Activated CD4-positive, alpha-beta memory T cell treated with anti-CD3 and anti-CD28 coated beads, Interleukin-2, amount 10 ng/mL, durations not matched to agents 7 days and 5 days (primary cell): ENCODE measurements at regions of chr1 and their contacts with region 1.

Region 1: GRCh38 chr1:223133824-223134435 is 9.1 kb downstream of the TLR5 start:
- DNase-seq: peak; percentile 75
- H3K4me3 Mint-ChIP-seq: no peak overlapping the region
- H3K27ac Mint-ChIP-seq: no peak overlapping the region
- H3K4me1 Mint-ChIP-seq: peaks cover 6% of the 10 kb centered on the region
- H3K27me3 Mint-ChIP-seq: peaks cover 56% of the 10 kb centered on the region

Region 2: DNA sequence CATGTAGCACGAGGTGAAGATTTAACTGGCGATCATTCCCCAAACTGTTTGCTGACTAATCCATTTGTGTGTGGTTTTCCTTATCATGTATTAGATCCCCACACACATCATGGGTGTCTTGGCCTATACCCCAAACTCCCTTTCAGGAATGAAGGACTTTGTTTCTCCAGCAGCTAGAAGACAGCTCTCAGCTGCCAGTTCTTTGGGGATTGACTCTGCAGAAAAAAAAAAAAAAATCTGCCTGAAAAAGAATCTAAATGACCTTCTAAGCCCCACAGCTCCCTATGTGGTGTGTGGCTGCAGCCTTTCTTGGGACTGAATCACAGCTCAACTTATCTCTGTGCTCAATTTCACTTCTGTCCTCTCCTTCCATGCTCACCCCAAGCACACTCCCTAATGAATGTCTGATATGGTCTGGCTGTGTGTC is 1135.7 kb before region 1 on chr1:
- CTCF ChIA-PET with region 1: no interaction called
- POLR2A ChIA-PET with region 1: no interaction called
- DNase-seq: no peak
- H3K4me3 Mint-ChIP-seq: no peak overlapping the region
- H3K27ac Mint-ChIP-seq: no peak overlapping the region
- H3K4me1 Mint-ChIP-seq: peaks cover 19% of the 10 kb centered on the region
- H3K27me3 Mint-ChIP-seq: no peaks in the 10 kb centered on the region

Region 3: DNA sequence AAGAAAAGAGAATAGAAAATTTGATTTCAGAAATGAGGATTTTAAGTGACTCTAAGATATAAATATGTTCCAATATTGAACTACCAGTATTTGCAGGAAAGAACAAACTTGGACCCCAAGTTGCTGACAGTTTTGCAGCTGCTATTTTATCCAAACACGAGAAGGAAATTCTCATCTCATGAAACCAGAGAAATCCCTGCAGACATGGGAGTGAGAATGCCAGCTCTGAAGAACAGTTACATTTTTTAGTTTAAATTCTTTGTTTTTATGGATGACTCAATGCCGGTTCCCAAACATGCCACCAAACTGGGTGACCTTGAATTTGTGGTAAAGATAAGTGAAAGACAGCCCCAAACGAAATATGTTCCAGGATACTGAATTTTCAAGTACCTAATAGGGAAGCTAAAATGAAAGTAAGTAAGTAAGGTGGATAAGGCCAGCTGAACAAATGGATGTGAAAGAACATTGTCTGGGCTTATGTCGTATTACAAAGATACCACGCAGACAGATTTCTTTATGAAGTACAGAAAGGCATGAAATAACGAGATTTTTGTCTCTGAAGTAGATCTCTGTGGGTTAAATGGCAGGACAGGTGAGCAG is 10.8 kb before region 1 on chr1:
- CTCF ChIA-PET with region 1: interaction called, 87 read pairs
- POLR2A ChIA-PET with region 1: interaction called, 3 read pairs
- DNase-seq: no peak
- H3K4me3 Mint-ChIP-seq: no peak overlapping the region
- H3K27ac Mint-ChIP-seq: no peak overlapping the region
- H3K4me1 Mint-ChIP-seq: peaks cover 7% of the 10 kb centered on the region
- H3K27me3 Mint-ChIP-seq: peaks cover 7% of the 10 kb centered on the region

Region 4: DNA sequence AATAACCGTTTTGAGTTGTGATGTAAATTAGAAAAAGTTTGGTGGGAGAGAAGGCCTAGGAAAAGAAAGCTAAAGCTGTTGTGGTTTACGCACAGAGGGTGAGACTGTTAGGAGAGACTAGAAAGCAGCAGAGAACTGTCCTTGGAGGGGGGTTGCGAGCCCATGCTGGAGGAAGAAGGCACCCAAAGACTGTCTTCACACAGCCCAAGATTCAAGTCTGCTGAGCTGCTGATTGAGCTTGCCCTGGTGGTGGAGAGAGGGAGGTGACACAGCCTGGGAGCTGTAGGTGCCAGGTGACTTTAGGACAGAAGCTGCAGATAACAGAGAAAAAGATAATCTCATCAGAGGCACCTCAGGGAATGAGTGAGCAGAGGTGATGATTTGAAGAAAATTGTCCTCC is 27.4 kb after region 1 on chr1:
- CTCF ChIA-PET with region 1: interaction called, 12 read pairs
- POLR2A ChIA-PET with region 1: no interaction called
- DNase-seq: no peak
- H3K4me3 Mint-ChIP-seq: no peak overlapping the region
- H3K27ac Mint-ChIP-seq: no peak overlapping the region
- H3K4me1 Mint-ChIP-seq: no peaks in the 10 kb centered on the region
- H3K27me3 Mint-ChIP-seq: no peaks in the 10 kb centered on the region

Region 5: GRCh38 chr1:223628233-223629125 is 494.5 kb after region 1 on chr1:
- CTCF ChIA-PET with region 1: interaction called, 12 read pairs
- POLR2A ChIA-PET with region 1: no interaction called
- DNase-seq: peak; percentile 44
- H3K4me3 Mint-ChIP-seq: no peak overlapping the region
- H3K27ac Mint-ChIP-seq: no peak overlapping the region
- H3K4me1 Mint-ChIP-seq: no peaks in the 10 kb centered on the region
- H3K27me3 Mint-ChIP-seq: peaks cover 7% of the 10 kb centered on the region

Region 6: GRCh38 chr1:223695941-223696340 is 562.0 kb after region 1 on chr1:
- CTCF ChIA-PET with region 1: interaction called, 10 read pairs
- POLR2A ChIA-PET with region 1: no interaction called
- DNase-seq: no peak
- H3K4me3 Mint-ChIP-seq: no peak overlapping the region
- H3K27ac Mint-ChIP-seq: no peak overlapping the region
- H3K4me1 Mint-ChIP-seq: peaks cover 15% of the 10 kb centered on the region
- H3K27me3 Mint-ChIP-seq: peaks cover 2% of the 10 kb centered on the region